ENCODE measurements at regions of chr5 and their contacts with region 1.

Region 1: DNA sequence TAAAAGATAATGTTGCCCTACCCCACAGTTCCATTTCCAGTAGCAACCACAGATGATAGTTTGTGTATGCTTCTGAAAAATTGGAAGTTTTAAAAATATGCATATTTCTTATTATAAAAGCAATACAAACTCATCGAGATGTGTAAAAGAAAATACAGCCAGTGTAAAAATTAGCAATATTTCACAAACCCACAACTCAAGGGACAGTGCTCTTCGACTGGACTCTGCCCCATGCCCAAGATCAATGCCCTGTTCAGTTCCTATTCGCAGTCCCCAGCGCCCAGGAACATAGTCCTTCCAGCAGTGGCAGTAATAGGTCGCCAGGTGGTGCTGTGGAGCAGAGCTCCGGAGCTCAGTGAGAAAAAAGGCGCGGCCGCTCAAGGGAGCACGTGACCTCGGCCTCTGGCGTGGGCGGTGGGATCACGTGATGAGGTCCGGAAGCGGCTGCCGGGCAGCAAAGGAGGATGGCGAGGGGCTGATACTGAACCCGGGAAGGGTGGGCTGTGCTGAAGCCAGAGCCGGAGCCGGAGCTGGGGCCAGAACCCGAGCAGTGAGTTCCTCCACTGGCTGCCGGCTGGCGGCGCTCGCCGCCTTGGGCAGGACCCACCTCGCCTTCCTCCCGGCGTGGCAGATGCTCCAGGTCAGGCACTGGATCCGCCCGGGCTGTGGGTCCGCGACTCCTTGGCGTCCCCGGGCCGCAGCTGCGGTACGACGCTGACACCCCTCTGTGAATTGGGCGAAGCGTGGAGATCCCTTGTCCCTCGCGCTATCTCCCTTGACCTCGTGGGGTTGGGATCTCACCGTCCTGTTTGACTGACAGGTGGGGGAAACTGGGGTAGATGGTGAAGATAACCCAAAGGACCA is at the start of gene SLC36A1:
- DNase-seq: peak; percentile 80 to 94 (median 91)
- ATAC-seq: peak; percentile 98
- H3K4me3 ChIP-seq: peak within 1 kb of the TSS; percentile 83 to 89
- H3K4me3 Mint-ChIP-seq: peak within 1 kb of the TSS; percentile 94
- H3K27ac ChIP-seq: peak within 1 kb of the TSS; percentile 55 to 68
- H3K27ac Mint-ChIP-seq: peak within 1 kb of the TSS; percentile 89
- H3K4me1 ChIP-seq: peaks cover 8% of the 10 kb centered on the region
- H3K4me1 Mint-ChIP-seq: peaks cover 24% of the 10 kb centered on the region
- H3K27me3 ChIP-seq: peaks cover 0 to 5% of the 10 kb centered on the region in 2 experiments
- H3K27me3 Mint-ChIP-seq: peaks cover 19% of the 10 kb centered on the region
- CTCF ChIP-seq: peak; percentile 96
- total RNA-seq, gene SLC36A1: 1.5 to 2.4 TPM

Region 2: GRCh38 chr5:149667084-149667828 is 1780.2 kb before region 1 on chr5:
- CTCF ChIA-PET with region 1: no interaction called
- POLR2A ChIA-PET with region 1: no interaction called
- intact Hi-C with region 1: no loop called
- DNase-seq: peak in 3 of 9 experiments; percentile 5 to 48 (median 33)
- ATAC-seq: no peak
- H3K4me3 ChIP-seq: no peak overlapping the region
- H3K4me3 Mint-ChIP-seq: no peak overlapping the region
- H3K27ac ChIP-seq: no peak overlapping the region
- H3K27ac Mint-ChIP-seq: no peak overlapping the region
- H3K4me1 ChIP-seq: no peaks in the 10 kb centered on the region
- H3K4me1 Mint-ChIP-seq: no peaks in the 10 kb centered on the region
- H3K27me3 ChIP-seq: no peaks in the 10 kb centered on the region
- H3K27me3 Mint-ChIP-seq: peaks cover 9% of the 10 kb centered on the region
- CTCF ChIP-seq: peak; percentile 61

Region 3: DNA sequence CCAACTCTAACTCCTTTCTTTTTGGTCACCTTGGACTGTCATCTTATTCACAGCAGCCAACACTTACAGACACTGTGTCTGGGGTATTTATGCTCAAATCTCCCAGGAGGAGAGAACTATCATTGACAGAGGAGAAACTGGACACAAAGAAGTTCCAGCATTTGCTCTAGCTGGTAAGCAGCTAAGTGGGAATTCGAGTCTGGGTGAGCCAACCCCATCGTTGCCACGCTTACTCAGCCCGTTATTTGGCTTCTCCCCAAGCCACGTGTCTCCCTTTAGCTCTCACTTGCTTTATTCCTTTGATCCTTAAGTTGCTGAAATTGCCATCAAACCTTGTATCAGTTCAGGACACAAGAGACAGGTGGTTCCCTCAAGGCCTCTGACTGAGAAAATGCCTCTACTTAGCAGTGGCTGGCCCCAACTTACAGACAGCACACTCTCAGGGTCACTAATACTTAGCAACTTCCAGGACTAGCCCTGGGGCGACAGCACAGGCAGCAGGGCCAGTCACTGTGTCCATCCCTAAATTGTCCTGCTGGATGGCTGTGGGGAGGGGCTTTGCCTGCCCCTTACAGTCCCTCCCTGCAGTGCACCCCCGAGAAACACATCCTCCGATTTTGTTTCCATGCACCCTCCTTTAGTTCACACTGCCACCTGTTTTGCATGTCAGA is 101.5 kb before region 1 on chr5:
- CTCF ChIA-PET with region 1: no interaction called
- POLR2A ChIA-PET with region 1: no interaction called
- intact Hi-C with region 1: no loop called
- DNase-seq: no peak
- ATAC-seq: no peak
- H3K4me3 ChIP-seq: no peak overlapping the region
- H3K4me3 Mint-ChIP-seq: no peak overlapping the region
- H3K27ac ChIP-seq: no peak overlapping the region
- H3K27ac Mint-ChIP-seq: no peak overlapping the region
- H3K4me1 ChIP-seq: no peaks in the 10 kb centered on the region
- H3K4me1 Mint-ChIP-seq: no peaks in the 10 kb centered on the region
- H3K27me3 ChIP-seq: peaks cover 0 to 5% of the 10 kb centered on the region in 2 experiments
- H3K27me3 Mint-ChIP-seq: peaks cover 38% of the 10 kb centered on the region
- CTCF ChIP-seq: no peak

Region 4: GRCh38 chr5:151461312-151461711 is 13.9 kb after region 1 on chr5:
- CTCF ChIA-PET with region 1: interaction called, 21 read pairs
- POLR2A ChIA-PET with region 1: interaction called, 5 read pairs
- intact Hi-C with region 1: no loop called
- DNase-seq: no peak
- ATAC-seq: no peak
- H3K4me3 ChIP-seq: no peak overlapping the region
- H3K4me3 Mint-ChIP-seq: no peak overlapping the region
- H3K27ac ChIP-seq: no peak overlapping the region
- H3K27ac Mint-ChIP-seq: no peak overlapping the region
- H3K4me1 ChIP-seq: no peaks in the 10 kb centered on the region
- H3K4me1 Mint-ChIP-seq: peaks cover 2% of the 10 kb centered on the region
- H3K27me3 ChIP-seq: no peaks in the 10 kb centered on the region
- H3K27me3 Mint-ChIP-seq: no peaks in the 10 kb centered on the region
- CTCF ChIP-seq: no peak

Region 5: DNA sequence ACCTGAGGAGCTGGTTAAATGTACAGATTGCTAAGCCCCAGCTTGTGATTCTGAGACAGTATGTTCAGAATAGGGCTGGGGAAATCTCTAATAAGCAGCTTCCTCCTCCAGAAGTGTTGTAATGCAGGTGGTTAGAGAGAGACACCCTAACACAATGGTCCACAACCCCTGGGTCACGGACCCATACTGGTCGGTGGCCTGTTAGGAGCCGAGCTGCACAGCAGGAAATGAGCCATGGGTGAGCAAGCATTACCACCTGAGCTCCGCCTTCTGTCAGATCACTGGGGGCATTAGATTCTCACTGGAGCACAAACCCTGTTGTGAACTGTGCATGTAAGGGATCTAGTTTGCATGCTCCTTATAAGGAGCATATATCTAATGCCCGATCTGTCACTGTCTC is 61.8 kb after region 1 on chr5:
- CTCF ChIA-PET with region 1: interaction called, 16 read pairs
- POLR2A ChIA-PET with region 1: no interaction called
- intact Hi-C with region 1: no loop called
- DNase-seq: no peak
- ATAC-seq: no peak
- H3K4me3 ChIP-seq: no peak overlapping the region
- H3K4me3 Mint-ChIP-seq: no peak overlapping the region
- H3K27ac ChIP-seq: no peak overlapping the region
- H3K27ac Mint-ChIP-seq: no peak overlapping the region
- H3K4me1 ChIP-seq: no peaks in the 10 kb centered on the region
- H3K4me1 Mint-ChIP-seq: no peaks in the 10 kb centered on the region
- H3K27me3 ChIP-seq: no peaks in the 10 kb centered on the region
- H3K27me3 Mint-ChIP-seq: no peaks in the 10 kb centered on the region
- CTCF ChIP-seq: no peak

Region 6: GRCh38 chr5:151651997-151652645 is 204.7 kb after region 1 on chr5:
- CTCF ChIA-PET with region 1: interaction called, 75 read pairs
- POLR2A ChIA-PET with region 1: interaction called, 7 read pairs
- intact Hi-C with region 1: loop called (anchors 1 kb)
- DNase-seq: peak; percentile 38 to 79 (median 56)
- ATAC-seq: peak; percentile 92
- H3K4me3 ChIP-seq: no peak overlapping the region
- H3K4me3 Mint-ChIP-seq: no peak overlapping the region
- H3K27ac ChIP-seq: no peak overlapping the region
- H3K27ac Mint-ChIP-seq: no peak overlapping the region
- H3K4me1 ChIP-seq: no peaks in the 10 kb centered on the region
- H3K4me1 Mint-ChIP-seq: peaks cover 5% of the 10 kb centered on the region
- H3K27me3 ChIP-seq: no peaks in the 10 kb centered on the region
- H3K27me3 Mint-ChIP-seq: no peaks in the 10 kb centered on the region
- CTCF ChIP-seq: peak; percentile 64

Region 7: DNA sequence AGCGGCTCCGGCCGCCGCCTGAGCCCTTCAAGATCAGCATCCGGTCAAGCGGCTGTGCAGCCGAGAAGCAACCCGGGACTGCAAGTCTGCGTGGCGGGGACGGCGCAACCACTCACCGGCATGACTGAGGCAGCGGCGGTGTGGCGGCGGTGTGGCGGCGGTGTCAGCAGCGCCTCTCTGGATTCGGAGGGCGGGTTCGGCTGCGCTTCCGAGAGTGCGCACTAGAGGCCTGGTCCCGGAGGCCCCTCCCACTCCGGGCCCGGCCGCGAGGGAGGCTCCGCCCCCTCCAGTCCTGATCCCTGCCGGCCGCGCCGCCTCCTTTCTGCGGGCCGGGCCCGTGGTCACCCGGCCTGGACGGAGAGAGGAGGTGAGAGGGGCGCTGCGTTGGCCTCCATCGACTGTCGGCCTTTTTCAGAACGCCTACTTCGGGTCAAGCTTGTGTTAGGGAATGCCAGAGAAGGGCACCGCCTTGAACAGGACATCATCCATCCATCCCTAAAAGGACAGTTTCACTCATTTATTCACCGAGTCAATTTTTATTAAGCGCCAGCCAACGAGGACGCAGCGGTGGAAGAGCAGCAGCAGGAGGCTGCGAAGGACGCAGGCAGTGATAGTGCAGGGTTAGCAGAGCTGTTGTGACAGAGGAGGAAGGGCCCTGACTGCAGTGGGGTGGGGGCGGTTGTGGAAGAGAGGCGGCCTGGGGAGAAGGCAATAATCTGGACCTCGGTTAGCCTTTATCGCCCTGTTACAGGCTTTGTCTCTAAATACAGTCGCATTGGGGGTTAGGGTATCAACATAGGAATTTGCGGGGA is 311.2 kb after region 1 on chr5 and contains the start of gene ATOX1:
- CTCF ChIA-PET with region 1: no interaction called
- POLR2A ChIA-PET with region 1: no interaction called
- intact Hi-C with region 1: loop called in 1 of 2 experiments (anchors 5 kb)
- DNase-seq: peak; percentile 82 to 94 (median 90)
- ATAC-seq: peak; percentile 99
- H3K4me3 ChIP-seq: peak within 1 kb of the TSS; percentile 61 to 91
- H3K4me3 Mint-ChIP-seq: peak within 1 kb of the TSS; percentile 95
- H3K27ac ChIP-seq: peak within 1 kb of the TSS; percentile 60 to 70
- H3K27ac Mint-ChIP-seq: peak within 1 kb of the TSS; percentile 94
- H3K4me1 ChIP-seq: peaks cover 26% of the 10 kb centered on the region
- H3K4me1 Mint-ChIP-seq: peaks cover 35% of the 10 kb centered on the region
- H3K27me3 ChIP-seq: no peaks in the 10 kb centered on the region
- H3K27me3 Mint-ChIP-seq: no peaks in the 10 kb centered on the region
- CTCF ChIP-seq: no peak
- total RNA-seq, gene ATOX1: 12.6 to 13.2 TPM

Measured in CD8-positive, alpha-beta T cell (primary cell).